Heart left ventricle (tissue), 16 donors: ENCODE measurements at regions of chr11 and their contacts with region 1.

Region 1: GRCh38 chr11:45655347-45655756 is 10.1 kb downstream of the CHST1 start:
- DNase-seq: peak; percentile 64 to 86 (median 72)
- ATAC-seq: peak in 3 of 4 donors; percentile 41 to 65 (median 59)
- H3K4me3 ChIP-seq: no peak overlapping the region
- H3K27ac ChIP-seq: no peak overlapping the region
- H3K4me1 ChIP-seq: peaks cover 4 to 36% (median 22%) of the 10 kb centered on the region in 12 donors
- H3K27me3 ChIP-seq: peaks cover 0 to 9% (median 0%) of the 10 kb centered on the region in 9 donors
- CTCF ChIP-seq: peak in 11 of 12 donors; percentile 88 to 95 (median 92)
- POLR2A ChIP-seq: no peak

Region 2: GRCh38 chr11:45371251-45372115 is 283.9 kb before region 1 on chr11:
- intact Hi-C with region 1: loop called (anchors 1 to 10 kb)
- DNase-seq: peak; percentile 44 to 71 (median 47)
- ATAC-seq: peak; percentile 35 to 75 (median 60)
- H3K4me3 ChIP-seq: peak overlapping the region in 2 of 12 donors; percentile 6 to 15
- H3K27ac ChIP-seq: no peak overlapping the region
- H3K4me1 ChIP-seq: peaks cover 0 to 7% (median 0%) of the 10 kb centered on the region in 12 donors
- H3K27me3 ChIP-seq: peaks cover 0 to 24% (median 4%) of the 10 kb centered on the region in 9 donors
- CTCF ChIP-seq: peak; percentile 77 to 94 (median 90)
- POLR2A ChIP-seq: no peak

Region 3: DNA sequence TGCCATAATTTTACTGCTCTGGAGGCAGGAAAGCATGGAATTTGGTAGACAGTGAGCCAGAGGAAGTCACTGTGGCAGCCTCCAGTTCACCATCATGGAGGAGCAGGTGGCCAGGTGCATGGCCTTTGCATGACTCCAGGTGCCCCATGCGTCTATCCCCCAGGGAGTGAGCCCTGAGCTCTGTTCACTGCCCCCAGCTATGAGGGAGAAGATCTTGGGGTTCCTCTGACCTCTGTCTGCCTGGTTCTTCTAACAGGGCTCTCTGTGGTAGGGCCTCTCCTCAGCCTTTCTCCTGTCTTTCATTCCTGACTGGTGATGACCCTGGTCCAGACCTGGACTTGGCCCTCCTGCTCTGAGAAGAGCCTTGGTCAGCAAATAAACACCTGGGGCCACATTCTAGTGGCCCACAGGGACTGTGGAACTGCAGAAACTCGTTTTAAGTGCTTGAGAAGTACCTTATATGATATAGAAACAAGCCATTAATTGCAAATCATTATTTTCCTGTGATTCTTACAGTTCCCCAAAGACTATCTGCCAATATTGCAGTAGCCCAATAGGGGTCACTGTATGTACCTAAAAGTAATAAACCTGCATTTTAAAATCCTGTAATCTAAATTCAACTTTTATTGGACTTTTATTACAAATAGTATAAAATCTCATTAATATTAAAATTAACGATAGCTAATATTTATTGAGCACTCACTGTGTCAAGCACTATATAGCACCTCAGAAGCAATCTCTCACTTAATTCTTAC is 249.3 kb before region 1 on chr11:
- intact Hi-C with region 1: loop called in 7 of 10 experiments (anchors 1 to 10 kb)
- DNase-seq: no peak
- ATAC-seq: no peak
- H3K4me3 ChIP-seq: no peak overlapping the region
- H3K27ac ChIP-seq: no peak overlapping the region
- H3K4me1 ChIP-seq: no peaks in the 10 kb centered on the region
- H3K27me3 ChIP-seq: peaks cover 0 to 17% (median 0%) of the 10 kb centered on the region in 9 donors
- CTCF ChIP-seq: peak; percentile 26 to 63 (median 50)
- POLR2A ChIP-seq: no peak

Region 4: GRCh38 chr11:45538363-45538762 is 117.0 kb before region 1 on chr11:
- intact Hi-C with region 1: loop called in 6 of 10 experiments (anchors 1 to 10 kb)
- DNase-seq: no peak
- ATAC-seq: peak; percentile 45 to 90 (median 87)
- H3K4me3 ChIP-seq: no peak overlapping the region
- H3K27ac ChIP-seq: no peak overlapping the region
- H3K4me1 ChIP-seq: no peaks in the 10 kb centered on the region
- H3K27me3 ChIP-seq: peaks cover 0 to 17% (median 3%) of the 10 kb centered on the region in 9 donors
- CTCF ChIP-seq: peak in 9 of 12 donors; percentile 11 to 51 (median 26)
- POLR2A ChIP-seq: no peak

Region 5: DNA sequence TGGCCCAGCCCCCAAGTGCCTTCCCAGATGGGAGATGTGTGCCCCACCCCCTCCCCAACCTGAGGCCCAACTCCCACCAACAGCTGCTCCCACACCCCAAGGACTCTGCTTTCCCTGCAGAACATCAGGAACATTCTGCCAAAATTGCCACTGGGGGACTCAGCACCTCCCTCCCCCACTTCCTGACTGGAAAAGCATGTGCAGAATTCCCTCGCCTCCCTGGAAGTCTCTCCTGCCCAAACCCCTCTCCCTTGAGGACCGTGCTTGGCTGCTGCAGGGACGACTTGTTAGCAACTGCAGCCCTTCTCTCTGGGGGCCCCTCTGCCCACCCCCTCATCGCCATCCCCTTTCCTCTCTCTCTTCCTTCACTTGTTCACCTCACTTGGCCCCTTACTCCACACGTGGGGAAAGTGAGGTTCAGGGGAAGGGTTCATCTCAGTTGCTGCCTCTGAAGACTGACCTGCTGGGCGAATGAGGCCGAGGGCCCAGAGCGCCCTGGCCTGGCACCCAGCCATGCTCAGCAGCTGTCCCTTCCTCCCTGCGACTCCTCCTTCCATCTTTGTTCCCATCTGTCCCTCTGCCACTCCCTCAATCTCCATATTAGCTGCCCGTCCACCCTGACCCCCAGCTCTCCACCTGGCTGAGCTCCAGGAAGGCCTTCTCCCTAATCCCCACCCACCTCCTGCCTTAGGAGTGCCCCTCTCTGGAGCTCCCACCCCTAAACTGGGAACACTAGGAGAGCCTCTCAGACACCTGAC is 95.0 kb before region 1 on chr11:
- intact Hi-C with region 1: loop called in 1 of 10 experiments (anchors 5 kb)
- DNase-seq: peak in 4 of 5 donors; percentile 31 to 66 (median 44)
- ATAC-seq: peak in 2 of 4 donors; percentile 17 to 34
- H3K4me3 ChIP-seq: no peak overlapping the region
- H3K27ac ChIP-seq: no peak overlapping the region
- H3K4me1 ChIP-seq: peaks cover 0 to 16% (median 11%) of the 10 kb centered on the region in 12 donors
- H3K27me3 ChIP-seq: no peaks in the 10 kb centered on the region
- CTCF ChIP-seq: no peak
- POLR2A ChIP-seq: no peak

Region 6: DNA sequence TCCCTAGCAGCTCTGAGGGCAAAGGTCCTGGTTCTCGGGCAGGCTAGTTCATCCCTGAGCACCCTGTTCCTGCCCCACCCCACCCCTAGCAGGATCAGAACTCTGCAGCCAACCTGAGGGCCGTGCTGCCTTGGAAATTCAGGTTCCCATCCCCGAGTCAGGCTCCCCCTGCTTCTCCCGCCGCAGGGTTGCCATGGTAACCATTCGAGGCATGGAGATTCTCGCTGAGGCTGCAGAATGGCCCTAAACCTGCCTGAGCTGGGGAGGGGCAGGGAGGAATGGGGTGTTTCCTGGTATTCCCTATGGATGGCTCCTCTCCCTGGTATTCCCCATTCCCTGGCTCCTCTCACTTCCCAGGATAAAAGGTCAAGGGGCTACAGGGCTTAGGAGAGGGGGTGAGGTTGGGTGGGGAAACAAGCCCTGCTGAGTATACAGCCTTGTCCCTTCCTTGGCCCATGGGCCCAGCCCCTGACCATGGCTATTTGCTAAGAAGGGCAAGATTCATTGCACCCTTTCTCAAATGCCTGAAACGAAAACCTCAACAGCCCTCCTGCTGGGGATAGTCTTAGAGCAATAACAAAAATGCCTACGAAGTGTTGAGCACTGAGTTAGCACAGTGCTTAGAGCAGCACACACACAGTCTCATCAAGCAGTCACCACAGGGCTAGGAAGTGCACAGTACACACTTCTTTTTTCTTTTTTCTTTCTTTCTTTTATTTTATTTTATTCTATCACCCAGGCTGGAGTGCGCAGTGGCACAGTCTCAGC is 48.7 kb before region 1 on chr11:
- intact Hi-C with region 1: loop called in 2 of 10 experiments (anchors 5 kb)
- DNase-seq: no peak
- ATAC-seq: no peak
- H3K4me3 ChIP-seq: no peak overlapping the region
- H3K27ac ChIP-seq: no peak overlapping the region
- H3K4me1 ChIP-seq: peaks cover 0 to 35% (median 11%) of the 10 kb centered on the region in 12 donors
- H3K27me3 ChIP-seq: peaks cover 0 to 7% (median 0%) of the 10 kb centered on the region in 9 donors
- CTCF ChIP-seq: no peak
- POLR2A ChIP-seq: no peak